Naive thymus-derived CD4-positive, alpha-beta T cell (primary cell): ENCODE measurements at regions of chr1 and their contacts with region 1.

Region 1: DNA sequence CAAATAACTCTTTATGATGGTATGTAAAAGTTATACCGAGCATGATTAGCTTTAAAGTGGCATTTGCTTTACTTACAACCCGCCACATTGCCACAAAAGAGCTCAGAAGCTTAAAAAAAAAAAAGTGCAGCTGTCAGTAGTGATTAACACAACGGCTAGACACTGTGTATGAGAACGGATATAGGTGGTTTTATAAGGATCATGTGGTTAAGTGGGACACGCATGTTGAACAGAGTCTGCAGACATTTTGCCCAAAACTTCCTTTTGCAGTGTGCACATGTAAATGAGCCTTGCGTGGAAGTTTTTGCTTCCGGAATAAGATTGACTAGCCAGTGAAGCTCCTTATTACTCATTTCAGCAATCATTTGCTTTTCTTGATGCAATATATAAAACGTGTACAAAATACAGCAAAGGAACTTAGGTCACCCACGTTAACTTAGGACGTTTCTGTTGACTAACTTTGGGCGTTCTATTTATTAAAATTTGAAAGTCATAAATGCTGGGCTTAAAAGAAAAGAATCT is 58.7 kb upstream of the RGS1 start:
- DNase-seq: peak in 8 of 9 donors; percentile 46 to 91 (median 87)
- ATAC-seq: peak; percentile 96
- H3K4me3 ChIP-seq: peak overlapping the region; percentile 27
- H3K4me3 Mint-ChIP-seq: peak overlapping the region; percentile 42 to 86 (median 78)
- H3K27ac ChIP-seq: peak overlapping the region; percentile 60
- H3K27ac Mint-ChIP-seq: peak overlapping the region; percentile 77 to 98 (median 93)
- H3K4me1 ChIP-seq: peaks cover 18 to 21% of the 10 kb centered on the region in 2 donors
- H3K4me1 Mint-ChIP-seq: peaks cover 32 to 56% (median 44%) of the 10 kb centered on the region in 7 donors
- H3K27me3 ChIP-seq: no peaks in the 10 kb centered on the region
- H3K27me3 Mint-ChIP-seq: no peaks in the 10 kb centered on the region

Region 2: DNA sequence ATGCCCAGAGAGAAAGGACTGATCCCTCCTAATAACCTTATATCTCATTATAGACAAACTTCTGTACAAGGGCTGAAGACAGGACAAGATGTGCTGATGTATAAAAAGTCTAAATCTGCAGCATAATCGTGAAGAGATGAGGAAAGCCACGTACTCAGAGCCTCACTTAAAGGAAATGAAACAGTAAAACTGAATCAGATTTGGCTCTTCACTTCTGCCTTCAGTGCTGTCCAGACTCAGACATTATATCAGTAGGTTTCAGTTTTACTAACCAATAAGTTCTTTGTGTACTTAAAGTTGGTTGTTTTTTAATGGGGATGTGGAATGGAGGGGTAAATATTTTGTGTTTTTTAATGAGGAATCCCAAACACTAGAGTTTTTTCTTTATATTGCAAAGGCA is 13.4 kb after region 1 on chr1:
- CTCF ChIA-PET with region 1: no interaction called
- POLR2A ChIA-PET with region 1: no interaction called
- intact Hi-C with region 1: loop called (anchors 1 kb)
- DNase-seq: no peak
- ATAC-seq: peak; percentile 58
- H3K4me3 ChIP-seq: no peak overlapping the region
- H3K4me3 Mint-ChIP-seq: peak overlapping the region in 1 of 10 donors; percentile 46
- H3K27ac ChIP-seq: no peak overlapping the region
- H3K27ac Mint-ChIP-seq: peak overlapping the region in 5 of 9 donors; percentile 17 to 60 (median 41)
- H3K4me1 ChIP-seq: peaks cover 4 to 10% of the 10 kb centered on the region in 2 donors
- H3K4me1 Mint-ChIP-seq: peaks cover 13 to 32% (median 24%) of the 10 kb centered on the region in 7 donors
- H3K27me3 ChIP-seq: no peaks in the 10 kb centered on the region
- H3K27me3 Mint-ChIP-seq: no peaks in the 10 kb centered on the region

Region 3: GRCh38 chr1:192545896-192546521 is 29.2 kb after region 1 on chr1:
- CTCF ChIA-PET with region 1: no interaction called
- POLR2A ChIA-PET with region 1: no interaction called
- intact Hi-C with region 1: loop called (anchors 1 to 5 kb)
- DNase-seq: no peak
- ATAC-seq: peak; percentile 45
- H3K4me3 ChIP-seq: no peak overlapping the region
- H3K4me3 Mint-ChIP-seq: peak overlapping the region in 1 of 10 donors; percentile 39
- H3K27ac ChIP-seq: no peak overlapping the region
- H3K27ac Mint-ChIP-seq: peak overlapping the region in 1 of 9 donors; percentile 25
- H3K4me1 ChIP-seq: peaks cover 0 to 43% of the 10 kb centered on the region in 2 donors
- H3K4me1 Mint-ChIP-seq: peaks cover 5 to 66% (median 15%) of the 10 kb centered on the region in 7 donors
- H3K27me3 ChIP-seq: no peaks in the 10 kb centered on the region
- H3K27me3 Mint-ChIP-seq: no peaks in the 10 kb centered on the region

Region 4: DNA sequence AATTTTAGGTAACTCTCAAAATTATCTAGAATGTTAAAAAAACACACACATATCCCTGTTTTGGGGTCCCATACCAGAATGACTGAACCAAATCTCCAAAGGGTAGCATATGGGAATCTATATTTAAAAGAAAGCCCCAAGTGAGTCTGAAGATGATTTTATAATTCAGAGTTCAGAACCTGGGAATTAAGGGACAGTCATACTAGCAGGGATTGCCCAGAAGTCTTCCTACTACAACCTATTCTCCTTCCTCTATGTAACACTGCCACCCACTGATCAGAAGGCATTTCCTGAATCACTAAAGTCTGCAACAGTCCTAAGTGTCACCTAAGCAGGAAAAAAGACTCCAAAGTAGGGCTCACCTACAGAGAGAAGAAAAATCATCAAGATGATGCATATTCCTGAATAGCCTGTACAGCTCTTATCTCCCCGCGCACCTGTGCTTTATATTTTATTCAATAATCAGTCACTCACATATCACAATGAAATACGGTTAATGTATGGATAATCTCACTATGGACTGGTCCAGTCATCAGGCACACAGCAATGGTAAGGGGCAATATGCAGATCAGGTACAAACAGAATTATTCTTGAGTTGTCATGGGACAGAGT is 63.6 kb after region 1 on chr1:
- CTCF ChIA-PET with region 1: interaction called, 6 read pairs
- POLR2A ChIA-PET with region 1: no interaction called
- intact Hi-C with region 1: loop called (anchors 1 kb)
- DNase-seq: peak in 3 of 9 donors; percentile 15 to 44 (median 38)
- ATAC-seq: peak; percentile 40
- H3K4me3 ChIP-seq: no peak overlapping the region
- H3K4me3 Mint-ChIP-seq: peak overlapping the region in 2 of 10 donors; percentile 31 to 40
- H3K27ac ChIP-seq: no peak overlapping the region
- H3K27ac Mint-ChIP-seq: peak overlapping the region in 2 of 9 donors; percentile 8 to 43
- H3K4me1 ChIP-seq: peaks cover 7 to 15% of the 10 kb centered on the region in 2 donors
- H3K4me1 Mint-ChIP-seq: peaks cover 8 to 44% (median 28%) of the 10 kb centered on the region in 7 donors
- H3K27me3 ChIP-seq: no peaks in the 10 kb centered on the region
- H3K27me3 Mint-ChIP-seq: peaks cover 0 to 2% (median 0%) of the 10 kb centered on the region in 5 donors